ENCODE measurements at regions of chr7 and their contacts with region 1.

Region 1: GRCh38 chr7:128739048-128739962 is at the start of gene CALU:
- DNase-seq: peak; percentile 97
- H3K4me3 ChIP-seq: peak within 1 kb of the TSS; percentile 87
- H3K27ac ChIP-seq: peak within 1 kb of the TSS; percentile 55
- H3K4me1 ChIP-seq: peaks cover 25% of the 10 kb centered on the region
- CTCF ChIP-seq: no peak; the same call in 1 of the 2 replicates
- total RNA-seq, gene CALU: 45.6 and 61.3 TPM in 2 replicates

Region 2: GRCh38 chr7:128755819-128756476 is 16.6 kb after region 1 on chr7:
- CTCF ChIA-PET with region 1: interaction called, 3 read pairs
- POLR2A ChIA-PET with region 1: interaction called, 17 read pairs
- intact Hi-C with region 1: no loop called
- DNase-seq: no peak
- H3K4me3 ChIP-seq: no peak overlapping the region
- H3K27ac ChIP-seq: no peak overlapping the region
- H3K4me1 ChIP-seq: no peaks in the 10 kb centered on the region
- CTCF ChIP-seq: no peak

Region 3: DNA sequence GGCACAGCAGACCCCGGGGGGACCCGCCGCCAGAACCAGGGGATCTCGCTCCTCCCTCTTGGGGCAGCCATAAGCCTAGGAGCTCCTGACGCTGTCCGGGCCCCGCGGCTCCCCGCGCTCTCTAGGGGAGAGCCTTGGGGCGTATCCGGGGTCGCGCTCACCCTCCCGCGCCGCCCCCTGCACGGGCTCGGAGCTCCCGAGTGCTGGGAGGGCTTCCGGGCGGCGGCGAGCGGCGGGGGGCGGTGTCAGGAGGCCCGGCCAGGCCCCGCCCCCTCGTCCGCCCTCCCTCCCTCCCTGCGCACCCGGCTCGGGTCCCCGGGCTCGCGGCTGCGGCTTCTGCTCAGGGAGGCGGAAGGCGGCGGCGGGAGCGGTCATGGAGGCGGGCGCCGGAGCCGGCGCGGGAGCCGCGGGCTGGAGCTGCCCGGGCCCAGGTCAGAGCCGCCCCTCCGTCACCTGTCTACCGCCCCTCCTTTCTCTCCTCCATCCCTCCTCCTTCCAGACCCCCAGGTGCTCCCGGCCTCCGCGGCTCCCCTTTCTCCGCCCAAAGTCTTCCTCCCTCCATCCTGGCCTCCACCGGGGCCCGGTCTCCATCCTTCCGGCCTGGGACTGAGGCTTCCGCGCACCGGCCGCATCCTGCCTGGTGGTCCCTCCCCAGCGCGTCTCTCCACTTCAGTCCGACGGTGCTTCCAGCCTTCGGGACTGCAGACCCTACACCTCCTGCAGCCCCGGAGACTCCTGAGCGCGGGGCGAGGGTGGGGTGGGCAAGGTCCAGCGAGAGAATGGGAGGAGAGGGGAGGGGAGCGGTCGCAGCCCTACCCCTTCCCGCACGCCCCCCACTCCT is 52.0 kb after region 1 on chr7:
- CTCF ChIA-PET with region 1: no interaction called
- POLR2A ChIA-PET with region 1: interaction called, 9 read pairs
- intact Hi-C with region 1: loop called (anchors 1 kb)
- DNase-seq: peak; percentile 86
- H3K4me3 ChIP-seq: peak overlapping the region; percentile 77
- H3K27ac ChIP-seq: no peak overlapping the region
- H3K4me1 ChIP-seq: peaks cover 16% of the 10 kb centered on the region
- CTCF ChIP-seq: no peak

Region 4: DNA sequence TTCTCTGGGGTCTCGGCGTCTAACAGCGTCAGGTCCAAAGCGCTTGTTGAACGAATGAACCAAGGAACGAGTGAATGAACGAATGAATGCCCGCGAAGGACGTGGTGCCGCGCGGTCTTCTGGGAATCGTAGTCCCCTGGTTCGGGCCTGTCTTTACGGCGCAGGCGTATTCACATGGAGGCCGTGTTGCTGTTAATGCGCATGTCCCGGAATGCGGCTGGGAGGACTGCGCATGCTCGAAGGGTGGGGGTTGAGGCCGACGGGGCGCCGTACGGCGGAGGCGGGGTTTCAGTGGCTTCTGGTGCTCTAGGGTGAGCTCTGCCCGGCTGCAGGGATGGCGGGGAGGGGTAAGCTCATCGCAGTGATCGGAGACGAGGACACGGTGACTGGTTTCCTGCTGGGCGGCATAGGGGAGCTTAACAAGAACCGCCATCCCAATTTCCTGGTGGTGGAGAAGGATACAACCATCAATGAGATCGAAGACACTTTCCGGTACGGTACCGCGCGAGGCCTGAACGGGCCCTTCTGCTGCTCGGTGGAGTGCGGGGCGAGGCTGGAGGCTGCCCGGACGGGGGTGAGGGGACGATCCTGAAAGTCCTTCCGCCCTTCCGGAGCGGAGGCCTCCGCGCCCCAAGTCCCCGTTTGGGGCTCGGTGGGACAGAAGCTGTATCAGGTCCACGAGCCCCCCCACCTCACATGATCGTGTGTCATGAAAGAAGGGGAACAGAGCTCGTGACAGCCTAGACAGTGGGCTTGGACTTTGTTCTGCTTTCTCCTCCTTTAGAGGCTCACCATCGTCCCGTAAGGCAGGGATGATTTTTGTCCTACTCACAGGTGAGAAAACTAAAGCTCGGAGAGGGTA is 123.5 kb after region 1 on chr7 and contains the start of gene ATP6V1F:
- CTCF ChIA-PET with region 1: no interaction called
- POLR2A ChIA-PET with region 1: interaction called, 12 read pairs
- intact Hi-C with region 1: no loop called
- DNase-seq: peak; percentile 98
- H3K4me3 ChIP-seq: peak within 1 kb of the TSS; percentile 83
- H3K27ac ChIP-seq: peak within 1 kb of the TSS; percentile 36
- H3K4me1 ChIP-seq: peaks cover 30% of the 10 kb centered on the region
- CTCF ChIP-seq: no peak
- total RNA-seq, gene ATP6V1F: 84.9 and 108 TPM in 2 replicates